HEK293 (cell line): ENCODE measurements at regions of chr1 and their contacts with region 1.

Region 1: GRCh38 chr1:53945433-53946251 is at the start of gene IFT25:
- H3K4me3 ChIP-seq: peak within 1 kb of the TSS; percentile 98
- H3K27ac ChIP-seq: peak within 1 kb of the TSS; percentile 63
- H3K4me1 ChIP-seq: peaks cover 5% of the 10 kb centered on the region; the same call in 1 of the 2 replicates
- CTCF ChIP-seq: no peak

Region 2: DNA sequence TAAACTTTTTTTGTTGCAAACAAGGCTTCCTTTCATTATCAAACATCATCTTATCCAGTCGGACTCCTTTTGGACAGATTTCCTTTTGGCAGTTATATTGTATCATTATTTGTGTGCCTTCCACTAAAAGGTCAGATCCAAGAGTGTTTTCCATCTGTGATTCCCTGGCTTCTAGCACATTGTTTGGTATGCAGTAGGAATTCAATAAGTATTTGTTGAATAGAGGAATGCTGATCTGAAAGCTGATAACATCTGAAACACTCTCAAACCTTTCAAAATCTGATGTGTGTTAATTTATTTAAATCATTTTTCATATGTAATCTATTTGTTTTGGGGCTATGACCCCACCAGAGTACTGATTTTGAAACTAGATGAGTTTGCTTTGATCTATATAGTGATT is 146.5 kb before region 1 on chr1:
- CTCF ChIA-PET with region 1: no interaction called
- POLR2A ChIA-PET with region 1: no interaction called
- H3K4me3 ChIP-seq: no peak overlapping the region
- H3K27ac ChIP-seq: no peak overlapping the region
- H3K4me1 ChIP-seq: no peaks in the 10 kb centered on the region
- CTCF ChIP-seq: no peak

Region 3: DNA sequence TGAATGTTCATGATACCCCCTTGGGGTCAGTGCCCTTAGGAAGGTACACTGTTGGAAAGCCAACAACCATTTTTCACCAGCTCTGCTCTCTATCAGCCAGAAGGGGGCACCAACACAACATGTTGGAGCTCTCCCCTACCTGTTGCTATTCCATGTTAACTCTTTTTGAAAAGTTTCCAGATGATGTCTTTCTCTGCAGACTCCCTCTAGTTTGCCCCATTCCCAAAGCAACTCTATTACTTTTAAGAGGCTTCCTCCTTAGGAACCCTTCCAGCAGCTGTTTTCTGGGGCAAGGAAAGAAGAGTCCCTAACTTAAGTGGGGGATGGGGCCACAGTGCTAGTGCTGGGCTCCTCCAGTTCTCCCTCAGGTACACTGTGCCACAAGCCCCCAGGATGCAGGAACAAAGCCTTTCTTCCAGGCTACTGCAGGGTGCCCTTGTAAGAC is 84.7 kb before region 1 on chr1:
- CTCF ChIA-PET with region 1: interaction called, 53 read pairs
- POLR2A ChIA-PET with region 1: interaction called, 8 read pairs
- H3K4me3 ChIP-seq: no peak overlapping the region
- H3K27ac ChIP-seq: no peak overlapping the region
- H3K4me1 ChIP-seq: no peaks in the 10 kb centered on the region
- CTCF ChIP-seq: peak; percentile 46; the same call in 1 of the 2 replicates

Region 4: GRCh38 chr1:53878492-53879105 is 67.0 kb before region 1 on chr1:
- CTCF ChIA-PET with region 1: interaction called, 56 read pairs
- POLR2A ChIA-PET with region 1: interaction called, 8 read pairs
- H3K4me3 ChIP-seq: no peak overlapping the region
- H3K27ac ChIP-seq: no peak overlapping the region
- H3K4me1 ChIP-seq: no peaks in the 10 kb centered on the region
- CTCF ChIP-seq: no peak

Region 5: GRCh38 chr1:53889304-53890298 is 56.0 kb before region 1 on chr1 and contains the start of gene YIPF1:
- CTCF ChIA-PET with region 1: interaction called, 4 read pairs
- POLR2A ChIA-PET with region 1: interaction called, 12 read pairs
- H3K4me3 ChIP-seq: peak within 1 kb of the TSS; percentile 80
- H3K27ac ChIP-seq: no peak within 1 kb of the TSS
- H3K4me1 ChIP-seq: no peaks in the 10 kb centered on the region
- CTCF ChIP-seq: no peak

Region 6: DNA sequence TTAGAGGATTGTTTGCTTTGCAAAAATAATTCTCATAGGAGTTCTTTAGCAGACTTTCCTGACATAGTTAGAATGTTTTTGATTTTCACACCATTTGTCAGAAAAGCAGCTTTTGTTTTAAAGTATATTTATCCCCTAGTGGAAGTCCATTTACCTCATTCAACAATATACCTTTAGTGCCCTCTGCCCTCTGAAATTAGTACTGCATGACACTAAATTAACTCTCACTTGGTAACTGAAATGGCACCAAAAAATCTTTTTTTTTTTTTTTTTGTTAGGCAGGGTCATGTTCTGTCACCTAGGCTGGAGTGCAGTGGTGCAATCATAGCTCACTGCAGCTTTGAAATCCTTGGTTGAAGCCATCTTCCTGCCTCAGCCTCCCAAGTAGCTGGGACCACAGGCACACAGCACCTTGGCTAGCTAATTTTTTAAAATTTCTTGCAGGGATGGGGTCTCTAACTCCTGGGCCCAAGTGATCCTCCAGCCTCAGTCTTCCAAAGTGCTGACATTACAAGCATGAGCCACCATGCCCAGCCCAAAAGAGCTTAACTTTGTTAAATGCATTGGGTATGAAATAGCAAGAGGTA is 14.1 kb after region 1 on chr1:
- CTCF ChIA-PET with region 1: interaction called, 43 read pairs
- POLR2A ChIA-PET with region 1: interaction called, 15 read pairs
- H3K4me3 ChIP-seq: no peak overlapping the region
- H3K27ac ChIP-seq: no peak overlapping the region
- H3K4me1 ChIP-seq: no peaks in the 10 kb centered on the region
- CTCF ChIP-seq: peak; percentile 34; the same call in 1 of the 2 replicates

Region 7: DNA sequence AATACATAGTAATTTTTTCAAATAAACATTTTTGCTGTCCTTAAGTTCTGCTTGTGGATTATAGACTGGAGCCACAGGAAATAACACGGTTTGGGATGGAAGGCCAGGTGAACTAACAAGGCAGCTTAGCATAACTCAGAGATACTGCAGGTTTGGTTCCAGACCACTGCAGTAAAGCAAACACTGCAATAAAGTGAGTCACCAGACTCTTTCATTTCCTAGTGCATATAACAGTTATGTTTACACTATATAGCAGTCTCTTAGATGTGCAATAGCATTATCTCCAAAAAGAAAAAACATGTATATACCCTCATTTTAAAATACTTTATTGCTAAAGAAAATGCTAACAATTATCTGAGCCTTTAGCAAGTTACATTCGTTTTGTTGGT is 22.5 kb after region 1 on chr1:
- CTCF ChIA-PET with region 1: interaction called, 5 read pairs
- POLR2A ChIA-PET with region 1: interaction called, 11 read pairs
- H3K4me3 ChIP-seq: no peak overlapping the region
- H3K27ac ChIP-seq: no peak overlapping the region
- H3K4me1 ChIP-seq: peaks cover 5% of the 10 kb centered on the region; the same call in 1 of the 2 replicates
- CTCF ChIP-seq: no peak

Region 8: GRCh38 chr1:54052934-54053744 is 107.5 kb after region 1 on chr1 and contains the starts of genes TCEANC2 and TMEM59:
- CTCF ChIA-PET with region 1: interaction called, 3 read pairs
- POLR2A ChIA-PET with region 1: interaction called, 20 read pairs
- H3K4me3 ChIP-seq: peak within 1 kb of the TSS; percentile 91
- H3K27ac ChIP-seq: peak within 1 kb of the TSS; percentile 62
- H3K4me1 ChIP-seq: peaks cover 4% of the 10 kb centered on the region
- CTCF ChIP-seq: no peak

Region 9: GRCh38 chr1:54095546-54096226 is 150.0 kb after region 1 on chr1:
- CTCF ChIA-PET with region 1: no interaction called
- POLR2A ChIA-PET with region 1: no interaction called
- H3K4me3 ChIP-seq: no peak overlapping the region
- H3K27ac ChIP-seq: no peak overlapping the region
- H3K4me1 ChIP-seq: no peaks in the 10 kb centered on the region
- CTCF ChIP-seq: no peak